Left lung (tissue), 14 donors: ENCODE measurements at regions of chr4 and their contacts with region 1.

Region 1: DNA sequence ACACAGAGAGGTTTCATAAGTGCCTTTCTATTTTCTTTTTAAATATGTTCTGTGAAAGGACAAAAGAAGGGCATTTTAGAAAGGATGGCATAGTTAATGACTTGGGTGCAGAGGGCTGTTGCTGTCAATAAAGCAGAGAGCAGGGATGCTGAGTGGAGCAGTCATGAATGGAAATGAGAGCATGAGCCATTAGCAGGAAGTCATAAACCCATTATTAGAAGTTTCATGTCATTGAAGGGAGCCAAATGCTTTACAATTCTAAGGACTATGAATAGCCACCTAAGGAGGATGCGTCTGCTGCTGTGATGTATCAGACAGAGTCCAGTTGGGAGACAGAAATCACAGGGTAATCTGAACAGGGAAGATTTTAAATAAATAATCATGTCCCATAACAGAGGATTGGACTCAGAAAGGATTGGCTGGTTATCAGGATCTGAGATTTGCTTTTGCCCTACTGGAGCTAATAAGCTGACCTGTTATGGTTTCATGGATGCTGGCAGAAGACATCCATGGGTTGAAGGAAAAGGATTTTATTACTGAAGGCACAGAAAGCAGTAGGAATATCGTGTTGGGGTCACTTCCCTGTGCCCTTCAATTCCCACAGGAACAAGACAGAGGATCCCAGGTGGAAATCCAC is 47.5 kb upstream of the WDR19 start:
- DNase-seq: no peak
- ATAC-seq: no peak
- H3K4me3 ChIP-seq: no peak overlapping the region
- H3K27ac ChIP-seq: no peak overlapping the region
- H3K4me1 ChIP-seq: peaks cover 0 to 10% of the 10 kb centered on the region in 2 donors
- H3K27me3 ChIP-seq: no peaks in the 10 kb centered on the region
- CTCF ChIP-seq: no peak

Region 2: DNA sequence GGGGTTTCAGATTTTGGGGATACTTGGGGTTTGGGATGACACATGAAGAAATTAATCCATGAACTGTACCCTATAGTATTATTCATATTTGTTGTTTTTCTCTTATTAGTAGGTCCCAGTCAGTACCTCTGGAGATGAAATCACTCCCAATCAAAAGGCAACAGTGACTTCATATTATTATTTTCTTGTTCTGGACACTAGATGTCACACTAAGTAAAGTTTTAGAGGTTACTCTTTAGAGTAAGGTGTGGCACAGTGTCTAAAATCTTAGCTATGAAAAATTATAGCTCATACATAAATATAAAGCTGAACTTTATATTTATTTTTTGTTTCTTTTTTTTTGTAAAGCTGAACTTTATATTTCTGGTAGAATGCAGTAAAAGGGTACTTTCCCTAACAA is 232.1 kb before region 1 on chr4:
- intact Hi-C with region 1: loop called in 1 of 2 experiments (anchors 10 kb)
- DNase-seq: peak in 1 of 4 donors; percentile 17
- ATAC-seq: peak; percentile 71
- H3K4me3 ChIP-seq: no peak overlapping the region
- H3K27ac ChIP-seq: no peak overlapping the region
- H3K4me1 ChIP-seq: no peaks in the 10 kb centered on the region
- H3K27me3 ChIP-seq: no peaks in the 10 kb centered on the region
- CTCF ChIP-seq: no peak

Region 3: DNA sequence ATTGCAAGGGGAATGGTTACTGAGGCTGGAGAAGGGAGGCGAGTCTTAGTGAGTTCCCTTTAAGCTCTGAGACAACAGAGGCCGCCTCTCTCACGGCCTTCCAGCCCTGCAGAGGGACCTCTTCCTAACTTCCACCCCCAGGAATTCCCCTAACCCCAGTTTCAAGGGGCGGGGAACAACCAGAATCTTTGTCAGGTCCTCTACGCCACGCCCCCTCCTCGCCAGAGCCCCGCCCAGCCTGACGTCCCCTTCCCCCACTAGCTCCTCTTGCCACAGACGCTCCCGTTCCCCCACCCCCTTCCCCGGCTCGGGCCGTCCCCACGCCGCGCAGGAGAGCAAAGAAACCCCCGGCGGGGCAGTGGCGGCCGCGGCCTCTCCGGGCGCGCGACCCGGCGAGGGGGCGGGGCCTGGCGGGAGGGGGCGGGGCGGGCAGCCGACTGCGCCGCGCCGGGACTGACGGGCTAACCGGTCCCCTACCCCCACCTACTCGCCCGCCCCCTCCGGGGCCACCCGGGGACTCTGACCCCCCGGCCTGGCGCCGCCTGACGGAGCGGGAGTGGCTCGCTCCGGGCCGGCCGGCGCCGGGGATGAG is 90.3 kb before region 1 on chr4:
- intact Hi-C with region 1: no loop called
- DNase-seq: peak; percentile 68 to 97 (median 92)
- ATAC-seq: peak; percentile 91
- H3K4me3 ChIP-seq: peak overlapping the region; percentile 65 to 70
- H3K27ac ChIP-seq: peak overlapping the region; percentile 92
- H3K4me1 ChIP-seq: peaks cover 0 to 52% of the 10 kb centered on the region in 2 donors
- H3K27me3 ChIP-seq: no peaks in the 10 kb centered on the region
- CTCF ChIP-seq: no peak